Psoas muscle (tissue), 8 donors: ENCODE measurements at regions of chr1 and their contacts with region 1.

Region 1: DNA sequence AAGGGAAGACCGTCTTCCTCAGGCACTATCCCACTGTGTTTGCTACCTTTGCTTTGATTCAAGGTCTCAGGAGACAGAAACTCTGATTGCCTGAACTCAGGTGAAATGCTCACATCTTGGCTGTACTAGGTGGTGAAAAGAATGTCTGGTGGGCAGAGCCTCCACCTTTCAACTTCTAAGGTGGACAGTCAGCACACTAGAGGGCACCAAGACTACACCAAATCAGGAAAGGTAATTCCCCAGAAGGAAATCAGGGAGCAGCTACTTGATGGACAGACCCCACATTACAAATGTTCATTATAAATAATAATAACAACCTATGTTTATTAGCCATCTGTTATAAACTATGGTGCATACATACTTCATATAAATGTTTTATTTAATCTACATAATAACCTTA is 220.9 kb downstream of the ATG4C start:
- DNase-seq: no peak
- ATAC-seq: no peak
- H3K4me3 ChIP-seq: no peak overlapping the region
- H3K27ac ChIP-seq: no peak overlapping the region
- H3K4me1 ChIP-seq: no peaks in the 10 kb centered on the region
- H3K27me3 ChIP-seq: peaks cover 0 to 10% (median 3%) of the 10 kb centered on the region in 3 donors
- CTCF ChIP-seq: no peak

Region 2: GRCh38 chr1:62783723-62784508 is 221.0 kb before region 1 on chr1 and contains the start of gene ATG4C:
- intact Hi-C with region 1: no loop called
- DNase-seq: peak; percentile 93 to 96
- ATAC-seq: peak; percentile 98 to 99 (median 99)
- H3K4me3 ChIP-seq: peak within 1 kb of the TSS; percentile 74
- H3K27ac ChIP-seq: peak within 1 kb of the TSS; percentile 95
- H3K4me1 ChIP-seq: peaks cover 18% of the 10 kb centered on the region
- H3K27me3 ChIP-seq: no peaks in the 10 kb centered on the region
- CTCF ChIP-seq: no peak
- total RNA-seq, gene ATG4C: 4.0 to 6.4 (median 5.6) TPM

Region 3: GRCh38 chr1:63624911-63625310 is 620.0 kb after region 1 on chr1:
- intact Hi-C with region 1: loop called in 1 of 2 experiments (anchors 10 kb)
- DNase-seq: no peak
- ATAC-seq: no peak
- H3K4me3 ChIP-seq: peak overlapping the region; percentile 60
- H3K27ac ChIP-seq: peak overlapping the region; percentile 81
- H3K4me1 ChIP-seq: peaks cover 77% of the 10 kb centered on the region
- H3K27me3 ChIP-seq: no peaks in the 10 kb centered on the region
- CTCF ChIP-seq: peak; percentile 21